CD8-positive, alpha-beta T cell (primary cell): ENCODE measurements at regions of chr1 and their contacts with region 1.

Region 1: DNA sequence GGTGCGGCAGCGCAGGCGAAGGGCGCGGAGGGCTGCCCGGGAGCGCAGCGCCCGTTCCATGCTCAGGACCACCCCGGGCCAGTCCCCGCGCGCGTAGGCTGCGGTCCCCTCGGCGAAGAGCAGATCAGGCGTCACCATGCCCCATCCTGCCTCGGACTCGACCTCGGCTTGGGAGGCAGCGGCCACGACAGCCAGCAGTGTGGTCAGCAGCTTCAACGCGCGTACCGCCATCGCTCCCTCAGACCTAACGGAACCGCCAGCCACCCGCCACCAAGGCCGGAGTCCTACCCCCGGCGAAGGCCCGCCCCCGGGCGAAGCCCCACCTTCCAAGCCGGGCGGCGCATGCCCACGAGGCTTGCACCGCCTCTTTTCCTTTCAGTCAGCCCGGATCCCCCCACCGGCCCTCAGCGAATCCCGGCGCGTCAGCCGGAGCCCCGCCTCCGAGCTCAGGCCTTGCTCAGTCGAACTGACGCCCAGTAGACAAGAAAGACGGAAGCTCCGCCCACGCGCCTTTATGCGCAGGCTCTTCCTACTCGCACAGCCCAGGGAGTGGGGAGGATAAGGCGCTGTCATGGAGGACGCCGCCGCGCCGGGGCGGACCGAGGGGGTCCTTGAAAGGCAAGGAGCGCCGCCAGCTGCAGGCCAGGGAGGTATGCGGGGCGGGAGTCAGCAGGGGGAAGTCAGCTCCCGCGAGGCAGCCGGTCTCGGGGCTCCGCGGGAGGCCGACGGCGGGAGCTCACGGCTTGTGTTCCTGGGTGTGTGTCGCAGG is at the starts of genes C1orf50 and P3H1:
- DNase-seq: peak; percentile 99 to 100 (median 99)
- ATAC-seq: peak; percentile 92
- H3K4me3 ChIP-seq: peak within 1 kb of the TSS; percentile 73 to 97
- H3K4me3 Mint-ChIP-seq: no peak within 1 kb of the TSS
- H3K27ac ChIP-seq: peak within 1 kb of the TSS; percentile 87 to 88
- H3K27ac Mint-ChIP-seq: peak within 1 kb of the TSS; percentile 97
- H3K4me1 ChIP-seq: peaks cover 40% of the 10 kb centered on the region
- H3K4me1 Mint-ChIP-seq: peaks cover 36% of the 10 kb centered on the region
- H3K27me3 ChIP-seq: no peaks in the 10 kb centered on the region
- H3K27me3 Mint-ChIP-seq: no peaks in the 10 kb centered on the region
- CTCF ChIP-seq: no peak
- total RNA-seq, gene C1orf50: 16.1 to 20.3 TPM
- total RNA-seq, gene P3H1: 19.6 to 22.5 TPM

Region 2: DNA sequence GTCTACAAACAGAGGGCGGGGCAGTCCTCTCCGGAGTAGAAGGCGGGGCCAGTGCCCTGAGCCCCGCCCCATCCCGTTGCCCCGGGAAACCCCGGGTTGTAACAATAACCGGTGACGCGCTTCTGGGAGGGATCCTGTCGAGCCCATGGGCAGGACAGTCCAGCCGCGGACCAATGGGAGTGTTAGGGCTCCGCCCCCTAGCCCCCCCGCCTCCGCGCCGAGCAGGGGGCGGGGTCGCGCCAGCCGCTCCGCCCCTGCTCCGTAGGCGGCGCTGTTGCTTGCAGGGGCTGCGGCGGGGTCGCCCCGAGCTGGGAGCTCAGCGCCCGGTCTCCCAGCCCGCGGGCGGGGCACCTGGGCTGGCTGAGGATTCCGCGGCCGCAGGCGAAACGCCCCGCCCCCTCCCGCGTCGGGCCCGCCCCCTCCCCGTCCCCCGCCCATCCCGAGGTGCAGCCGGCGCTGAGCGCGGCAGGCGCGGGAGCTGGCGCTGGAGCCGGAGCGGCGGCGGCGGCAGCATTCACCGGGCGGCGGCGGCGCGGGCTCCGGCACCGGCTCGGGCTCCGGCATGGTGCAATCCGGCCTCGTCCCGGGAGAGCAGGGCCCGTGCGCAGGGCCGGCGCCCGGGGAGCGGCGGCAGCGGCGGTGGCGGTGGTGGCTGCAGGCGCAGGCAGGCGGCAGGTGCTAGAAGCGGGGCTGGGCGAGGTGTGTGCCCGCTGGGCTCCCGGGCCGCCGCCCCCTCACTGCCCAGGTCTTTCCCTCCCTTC is 1405.8 kb before region 1 on chr1 and contains the start of gene FOXO6:
- CTCF ChIA-PET with region 1: no interaction called
- POLR2A ChIA-PET with region 1: no interaction called
- intact Hi-C with region 1: loop called in 1 of 2 experiments (anchors 5 kb)
- DNase-seq: peak; percentile 85 to 97 (median 94)
- ATAC-seq: peak; percentile 90
- H3K4me3 ChIP-seq: peak within 1 kb of the TSS; percentile 35 to 52
- H3K4me3 Mint-ChIP-seq: peak within 1 kb of the TSS; percentile 82
- H3K27ac ChIP-seq: peak within 1 kb of the TSS; percentile 14 to 25
- H3K27ac Mint-ChIP-seq: peak within 1 kb of the TSS; percentile 28
- H3K4me1 ChIP-seq: peaks cover 22% of the 10 kb centered on the region
- H3K4me1 Mint-ChIP-seq: peaks cover 23% of the 10 kb centered on the region
- H3K27me3 ChIP-seq: peaks cover 10 to 11% of the 10 kb centered on the region in 2 experiments
- H3K27me3 Mint-ChIP-seq: peaks cover 29% of the 10 kb centered on the region
- CTCF ChIP-seq: no peak
- total RNA-seq, gene FOXO6: 1.4 to 1.7 TPM

Region 3: DNA sequence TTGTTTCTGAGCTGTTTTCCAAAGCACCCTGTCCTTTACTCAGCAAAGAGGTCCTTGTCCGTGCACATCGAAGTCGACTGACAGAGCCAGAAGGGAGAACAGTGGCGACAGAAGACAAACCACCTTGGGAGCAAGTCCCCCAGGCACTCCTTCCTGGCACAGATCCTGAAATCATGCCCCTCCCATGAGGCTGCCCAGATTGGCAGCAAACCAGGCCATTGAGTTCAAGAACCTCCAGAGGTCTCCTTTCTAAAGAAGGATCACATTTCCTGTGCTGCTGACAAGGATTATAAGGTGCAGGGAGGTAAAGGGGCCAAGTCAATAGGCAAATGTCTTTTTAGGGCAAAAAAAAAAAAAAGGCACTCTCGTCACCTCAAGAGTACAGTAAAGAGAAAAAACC is 763.5 kb before region 1 on chr1:
- CTCF ChIA-PET with region 1: no interaction called
- POLR2A ChIA-PET with region 1: no interaction called
- intact Hi-C with region 1: no loop called
- DNase-seq: no peak
- ATAC-seq: no peak
- H3K4me3 ChIP-seq: no peak overlapping the region
- H3K4me3 Mint-ChIP-seq: no peak overlapping the region
- H3K27ac ChIP-seq: no peak overlapping the region
- H3K27ac Mint-ChIP-seq: no peak overlapping the region
- H3K4me1 ChIP-seq: no peaks in the 10 kb centered on the region
- H3K4me1 Mint-ChIP-seq: peaks cover 2% of the 10 kb centered on the region
- H3K27me3 ChIP-seq: no peaks in the 10 kb centered on the region
- H3K27me3 Mint-ChIP-seq: no peaks in the 10 kb centered on the region
- CTCF ChIP-seq: no peak

Region 4: GRCh38 chr1:42657971-42658879 is 108.7 kb before region 1 on chr1 and contains the start of gene PPIH:
- CTCF ChIA-PET with region 1: no interaction called
- POLR2A ChIA-PET with region 1: interaction called, 10 read pairs
- intact Hi-C with region 1: loop called (anchors 1 to 2 kb)
- DNase-seq: peak; percentile 87 to 97 (median 95)
- ATAC-seq: peak; percentile 98
- H3K4me3 ChIP-seq: peak within 1 kb of the TSS; percentile 78 to 90
- H3K4me3 Mint-ChIP-seq: peak within 1 kb of the TSS; percentile 99
- H3K27ac ChIP-seq: peak within 1 kb of the TSS; percentile 54 to 81
- H3K27ac Mint-ChIP-seq: peak within 1 kb of the TSS; percentile 87
- H3K4me1 ChIP-seq: peaks cover 24% of the 10 kb centered on the region
- H3K4me1 Mint-ChIP-seq: peaks cover 45% of the 10 kb centered on the region
- H3K27me3 ChIP-seq: no peaks in the 10 kb centered on the region
- H3K27me3 Mint-ChIP-seq: no peaks in the 10 kb centered on the region
- CTCF ChIP-seq: no peak
- total RNA-seq, gene PPIH: 31.0 to 33.2 TPM

Region 5: GRCh38 chr1:42777852-42778251 is 10.9 kb after region 1 on chr1:
- CTCF ChIA-PET with region 1: interaction called, 12 read pairs
- POLR2A ChIA-PET with region 1: interaction called, 34 read pairs
- intact Hi-C with region 1: no loop called
- DNase-seq: peak in 5 of 9 experiments; percentile 21 to 52 (median 27)
- ATAC-seq: peak; percentile 68
- H3K4me3 ChIP-seq: no peak overlapping the region
- H3K4me3 Mint-ChIP-seq: no peak overlapping the region
- H3K27ac ChIP-seq: no peak overlapping the region
- H3K27ac Mint-ChIP-seq: no peak overlapping the region
- H3K4me1 ChIP-seq: no peaks in the 10 kb centered on the region
- H3K4me1 Mint-ChIP-seq: peaks cover 10% of the 10 kb centered on the region
- H3K27me3 ChIP-seq: no peaks in the 10 kb centered on the region
- H3K27me3 Mint-ChIP-seq: no peaks in the 10 kb centered on the region
- CTCF ChIP-seq: peak; percentile 57

Region 6: DNA sequence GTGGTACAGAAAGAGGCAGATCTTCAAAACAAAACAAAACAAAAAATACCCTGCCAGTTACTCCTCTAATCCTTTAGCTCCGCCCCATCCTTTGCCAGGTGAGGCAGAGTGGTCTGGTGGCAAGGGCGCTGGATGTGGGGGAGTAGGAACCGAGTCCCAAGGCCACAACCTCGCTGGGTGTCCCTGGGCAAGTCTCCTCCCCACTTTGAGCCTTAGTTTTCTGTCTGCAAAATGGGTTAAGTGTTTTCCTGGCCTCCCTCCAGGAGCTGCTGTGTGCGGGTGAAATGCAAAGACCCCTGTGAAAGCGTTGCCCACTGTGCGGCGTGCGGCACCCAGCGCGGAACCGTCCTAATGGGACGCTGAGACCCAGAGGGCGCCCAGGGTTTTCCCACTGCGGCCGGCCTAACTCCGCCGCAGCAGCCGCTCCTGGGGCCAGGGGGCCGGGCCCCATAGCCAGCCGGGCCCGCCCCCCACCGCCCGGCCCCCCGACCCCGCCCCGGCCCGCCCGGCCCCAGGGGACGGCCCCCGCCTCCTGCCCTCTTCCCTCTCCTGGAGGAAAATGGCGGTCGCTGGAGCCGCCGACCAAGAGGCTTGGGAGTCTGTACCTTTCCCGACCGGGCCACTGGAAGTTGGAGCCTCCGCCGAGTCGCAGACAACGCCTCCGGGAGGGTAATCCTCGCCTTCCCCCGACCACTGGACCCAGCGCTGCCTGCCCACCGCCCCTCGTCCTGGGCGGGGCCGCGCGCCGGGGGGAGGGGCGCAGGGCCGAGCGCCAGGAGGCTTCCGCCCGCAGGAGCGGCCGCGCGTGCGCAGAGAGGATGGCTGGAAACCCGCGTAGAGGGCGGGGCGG is 49.9 kb after region 1 on chr1 and contains the starts of genes ERMAP and SVBP:
- CTCF ChIA-PET with region 1: interaction called, 3 read pairs
- POLR2A ChIA-PET with region 1: interaction called, 28 read pairs
- intact Hi-C with region 1: loop called (anchors 1 kb)
- DNase-seq: peak; percentile 85 to 98 (median 95)
- ATAC-seq: peak; percentile 91
- H3K4me3 ChIP-seq: peak within 1 kb of the TSS; percentile 63 to 88
- H3K4me3 Mint-ChIP-seq: peak within 1 kb of the TSS; percentile 80
- H3K27ac ChIP-seq: peak within 1 kb of the TSS; percentile 69 to 89
- H3K27ac Mint-ChIP-seq: peak within 1 kb of the TSS; percentile 85
- H3K4me1 ChIP-seq: peaks cover 16% of the 10 kb centered on the region
- H3K4me1 Mint-ChIP-seq: peaks cover 27% of the 10 kb centered on the region
- H3K27me3 ChIP-seq: no peaks in the 10 kb centered on the region
- H3K27me3 Mint-ChIP-seq: no peaks in the 10 kb centered on the region
- CTCF ChIP-seq: no peak
- total RNA-seq, gene ERMAP: 3.0 to 3.3 TPM
- total RNA-seq, gene SVBP: 17.6 to 18.3 TPM

Region 7: DNA sequence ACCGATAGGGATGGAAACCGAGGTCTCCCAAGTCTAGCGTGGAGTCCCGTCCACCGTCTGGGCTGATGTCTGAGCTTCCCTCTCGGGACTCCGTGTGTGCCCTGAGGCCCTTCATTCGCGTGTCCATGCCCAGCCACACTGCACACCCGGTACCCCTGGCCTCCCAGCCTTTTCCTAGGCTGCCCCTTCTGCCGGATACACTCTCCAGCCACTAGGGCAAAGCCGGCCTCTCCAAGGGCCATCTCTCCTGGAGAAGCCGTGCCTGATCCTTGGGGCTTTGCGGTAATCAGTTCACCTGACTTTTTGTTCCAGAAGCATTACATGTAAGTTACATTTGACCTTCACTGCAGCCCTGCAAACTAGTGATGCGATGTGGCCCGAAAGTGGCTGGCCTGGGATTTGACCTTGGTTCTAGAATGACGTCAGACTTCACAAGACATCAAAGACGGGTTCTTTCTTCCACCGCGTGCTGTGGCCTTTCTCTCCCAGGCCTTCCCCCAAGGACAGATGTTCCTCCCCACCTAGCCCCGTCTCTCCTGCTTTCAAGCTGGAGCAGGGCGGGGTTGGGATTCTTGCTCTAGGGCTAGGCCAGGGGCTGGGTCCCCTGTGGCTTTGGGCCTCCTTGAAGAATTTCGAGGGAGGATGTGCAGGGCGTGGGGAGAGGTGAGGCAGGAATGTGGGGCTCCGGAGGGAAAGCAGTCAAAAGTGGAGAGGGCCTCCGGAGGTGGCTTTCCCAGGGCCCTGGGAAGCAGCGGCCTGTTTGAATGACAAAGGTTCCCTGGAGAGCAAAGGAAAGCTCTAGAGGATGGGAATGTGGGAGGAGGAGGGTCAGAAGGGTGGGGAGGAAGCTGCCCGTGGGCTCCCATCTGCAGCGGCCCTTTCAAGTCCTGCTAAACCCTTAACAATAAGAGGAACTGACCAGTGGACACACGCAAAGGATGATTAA is 241.5 kb after region 1 on chr1:
- CTCF ChIA-PET with region 1: no interaction called
- POLR2A ChIA-PET with region 1: no interaction called
- intact Hi-C with region 1: no loop called
- DNase-seq: no peak
- ATAC-seq: no peak
- H3K4me3 ChIP-seq: no peak overlapping the region
- H3K4me3 Mint-ChIP-seq: no peak overlapping the region
- H3K27ac ChIP-seq: no peak overlapping the region
- H3K27ac Mint-ChIP-seq: no peak overlapping the region
- H3K4me1 ChIP-seq: no peaks in the 10 kb centered on the region
- H3K4me1 Mint-ChIP-seq: no peaks in the 10 kb centered on the region
- H3K27me3 ChIP-seq: no peaks in the 10 kb centered on the region
- H3K27me3 Mint-ChIP-seq: no peaks in the 10 kb centered on the region
- CTCF ChIP-seq: no peak